ENCODE measurements at regions of chr2 and their contacts with region 1.

Region 1: GRCh38 chr2:60707750-60708371 is 48.2 kb upstream of the PAPOLG start:
- DNase-seq: no peak
- ATAC-seq: peak; percentile 64 to 71
- H3K4me3 ChIP-seq: no peak overlapping the region
- H3K27ac ChIP-seq: no peak overlapping the region
- H3K4me1 ChIP-seq: no peaks in the 10 kb centered on the region
- H3K27me3 ChIP-seq: no peaks in the 10 kb centered on the region
- CTCF ChIP-seq: peak; percentile 70

Region 2: GRCh38 chr2:60998628-60999545 is 291.0 kb after region 1 on chr2:
- intact Hi-C with region 1: loop called (anchors 5 kb)
- DNase-seq: no peak
- ATAC-seq: peak in 1 of 2 donors; percentile 61
- H3K4me3 ChIP-seq: no peak overlapping the region
- H3K27ac ChIP-seq: no peak overlapping the region
- H3K4me1 ChIP-seq: no peaks in the 10 kb centered on the region
- H3K27me3 ChIP-seq: no peaks in the 10 kb centered on the region
- CTCF ChIP-seq: peak; percentile 70